Activated CD4-positive, alpha-beta T cell treated with anti-CD3 and anti-CD28 coated beads for 36 hours (primary cell): ENCODE measurements at regions of chr1 and their contacts with region 1.

Region 1: DNA sequence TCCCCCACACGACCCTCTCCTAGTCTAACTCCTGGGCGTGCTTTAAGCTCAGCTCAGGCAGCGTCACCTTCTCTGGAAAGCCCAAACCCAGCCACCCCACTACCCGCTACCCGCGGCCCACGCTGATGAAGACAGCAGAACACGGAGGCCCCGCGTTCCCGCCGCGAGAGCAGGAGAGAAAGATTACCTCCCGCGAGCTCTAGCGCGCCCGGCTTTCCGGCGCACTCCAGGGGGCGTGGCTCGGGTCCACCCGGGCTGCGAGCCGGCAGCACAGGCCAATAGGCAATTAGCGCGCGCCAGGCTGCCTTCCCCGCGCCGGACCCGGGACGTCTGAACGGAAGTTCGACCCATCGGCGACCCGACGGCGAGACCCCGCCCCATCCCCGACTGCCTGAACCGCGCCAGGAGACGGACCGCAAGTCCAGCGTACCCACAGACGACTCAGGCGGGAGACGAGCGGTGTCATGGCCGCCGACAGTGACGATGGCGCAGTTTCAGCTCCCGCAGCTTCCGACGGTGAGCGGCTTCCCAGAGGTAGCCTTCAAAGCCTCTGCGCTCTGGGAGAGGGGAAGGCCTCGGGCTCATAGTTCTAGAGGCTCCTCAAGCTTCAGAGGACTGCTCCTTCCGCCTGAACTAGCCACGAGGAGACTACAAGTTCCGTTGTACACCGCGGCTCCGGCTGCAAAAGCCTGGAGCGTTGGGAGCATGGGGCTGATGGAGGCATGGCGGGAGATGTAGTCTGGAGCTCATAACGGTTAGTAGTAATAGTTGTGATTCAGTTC is at the starts of genes MUTYH and TOE1:
- DNase-seq: peak; percentile 98
- ATAC-seq: peak; percentile 86
- H3K4me3 Mint-ChIP-seq: peak within 1 kb of the TSS; percentile 100
- H3K27ac Mint-ChIP-seq: peak within 1 kb of the TSS; percentile 100
- H3K4me1 Mint-ChIP-seq: peaks cover 27% of the 10 kb centered on the region
- H3K27me3 Mint-ChIP-seq: no peaks in the 10 kb centered on the region
- total RNA-seq, gene MUTYH: 48.6 to 53.7 TPM
- total RNA-seq, gene TOE1: 29.8 to 42.3 TPM

Region 2: GRCh38 chr1:44674113-44675000 is 665.6 kb before region 1 on chr1 and contains the starts of genes ARMH1 and TMEM53:
- CTCF ChIA-PET with region 1: no interaction called
- POLR2A ChIA-PET with region 1: interaction called, 3 read pairs
- intact Hi-C with region 1: loop called in 1 of 2 experiments (anchors 1 kb)
- DNase-seq: peak; percentile 99
- ATAC-seq: peak; percentile 97
- H3K4me3 Mint-ChIP-seq: peak within 1 kb of the TSS; percentile 78
- H3K27ac Mint-ChIP-seq: peak within 1 kb of the TSS; percentile 84
- H3K4me1 Mint-ChIP-seq: peaks cover 24% of the 10 kb centered on the region
- H3K27me3 Mint-ChIP-seq: no peaks in the 10 kb centered on the region
- total RNA-seq, gene ARMH1: 67.3 to 75.1 TPM
- total RNA-seq, gene TMEM53: 4.3 to 5.5 TPM

Region 3: DNA sequence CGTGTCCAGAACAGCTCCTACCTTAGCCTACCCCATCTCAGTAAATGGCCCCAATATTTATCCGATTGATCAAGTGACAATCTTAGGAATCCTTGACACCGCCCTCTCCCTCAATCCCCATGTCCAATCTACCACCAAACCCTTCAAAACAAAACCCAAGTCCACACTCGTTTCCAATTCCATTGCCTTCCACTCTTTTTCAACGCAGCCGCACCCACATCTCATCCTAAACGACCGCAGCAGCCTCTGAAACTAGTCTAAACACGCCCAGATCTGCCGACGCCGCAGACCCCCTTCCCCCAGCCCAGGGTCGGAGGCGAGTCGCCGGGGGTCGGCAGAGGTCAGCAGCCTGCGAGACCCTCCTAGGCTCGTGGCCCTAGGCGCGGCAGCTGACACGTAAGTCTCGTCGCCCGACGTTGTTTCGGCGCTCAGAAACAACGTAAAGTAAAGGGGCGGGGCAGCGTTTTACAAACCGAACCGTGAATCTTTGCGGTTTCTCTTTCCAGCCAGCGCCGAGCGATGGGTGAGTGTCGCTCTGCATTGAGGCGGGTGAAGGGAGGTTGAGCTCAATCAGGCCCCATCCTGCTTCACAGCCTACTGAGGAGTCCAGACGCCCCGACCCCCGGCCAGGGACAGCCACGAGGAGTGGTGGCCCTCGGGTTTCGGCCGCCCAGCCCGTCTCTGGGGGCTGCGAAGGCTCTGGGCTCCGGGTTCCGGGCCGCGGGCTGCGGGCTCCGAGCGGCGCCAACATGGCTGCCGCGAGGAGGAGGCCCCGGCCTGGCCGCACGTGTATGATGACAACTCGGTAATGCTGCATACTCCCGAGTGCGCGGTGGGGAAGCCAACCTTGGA is 564.7 kb before region 1 on chr1 and contains the start of gene RPS8:
- CTCF ChIA-PET with region 1: no interaction called
- POLR2A ChIA-PET with region 1: interaction called, 5 read pairs
- intact Hi-C with region 1: loop called in 1 of 2 experiments (anchors 1 kb)
- DNase-seq: peak; percentile 94
- ATAC-seq: peak; percentile 84
- H3K4me3 Mint-ChIP-seq: peak within 1 kb of the TSS; percentile 96
- H3K27ac Mint-ChIP-seq: peak within 1 kb of the TSS; percentile 100
- H3K4me1 Mint-ChIP-seq: peaks cover 33% of the 10 kb centered on the region
- H3K27me3 Mint-ChIP-seq: no peaks in the 10 kb centered on the region
- total RNA-seq, gene RPS8: 3,005 to 3,275 TPM

Region 4: DNA sequence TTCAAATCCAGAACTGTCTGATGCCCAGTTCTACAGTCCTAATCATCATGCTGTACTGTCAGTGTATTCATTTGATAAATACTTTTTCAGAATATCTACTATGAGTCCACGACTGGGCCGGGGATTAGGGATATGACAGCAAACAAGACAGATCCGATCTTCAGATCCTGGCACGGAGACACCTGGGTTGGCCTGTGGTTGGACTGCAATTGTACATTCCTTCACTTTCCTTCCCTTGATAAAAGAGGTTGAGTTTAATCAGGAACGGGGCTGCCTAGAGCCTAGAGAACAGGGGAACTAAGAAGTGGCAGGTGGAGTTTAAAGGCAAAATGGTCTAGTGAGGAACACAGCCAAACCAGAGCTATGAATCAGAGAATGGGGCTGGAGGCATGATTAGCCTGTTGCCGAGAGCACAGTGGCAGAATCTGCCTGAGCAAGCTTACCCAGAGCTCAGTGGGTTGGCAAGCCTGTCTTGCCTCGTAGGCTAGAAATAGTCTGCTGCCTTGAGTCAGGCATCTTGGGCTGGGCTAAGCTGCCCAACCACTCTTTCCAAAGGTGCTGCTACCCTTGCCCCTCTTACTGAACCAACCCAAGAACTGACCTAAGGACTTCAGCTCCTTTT is 458.9 kb before region 1 on chr1:
- CTCF ChIA-PET with region 1: no interaction called
- POLR2A ChIA-PET with region 1: no interaction called
- intact Hi-C with region 1: no loop called
- DNase-seq: no peak
- ATAC-seq: no peak
- H3K4me3 Mint-ChIP-seq: no peak overlapping the region
- H3K27ac Mint-ChIP-seq: no peak overlapping the region
- H3K4me1 Mint-ChIP-seq: no peaks in the 10 kb centered on the region
- H3K27me3 Mint-ChIP-seq: no peaks in the 10 kb centered on the region

Region 5: GRCh38 chr1:44985747-44986359 is 354.1 kb before region 1 on chr1:
- CTCF ChIA-PET with region 1: no interaction called
- POLR2A ChIA-PET with region 1: interaction called, 8 read pairs
- intact Hi-C with region 1: loop called in 1 of 2 experiments (anchors 1 kb)
- DNase-seq: no peak
- ATAC-seq: no peak
- H3K4me3 Mint-ChIP-seq: peak overlapping the region; percentile 96
- H3K27ac Mint-ChIP-seq: peak overlapping the region; percentile 87
- H3K4me1 Mint-ChIP-seq: peaks cover 22% of the 10 kb centered on the region
- H3K27me3 Mint-ChIP-seq: no peaks in the 10 kb centered on the region

Region 6: GRCh38 chr1:45122724-45123123 is 217.3 kb before region 1 on chr1:
- CTCF ChIA-PET with region 1: no interaction called
- POLR2A ChIA-PET with region 1: no interaction called
- intact Hi-C with region 1: no loop called
- DNase-seq: no peak
- ATAC-seq: no peak
- H3K4me3 Mint-ChIP-seq: no peak overlapping the region
- H3K27ac Mint-ChIP-seq: no peak overlapping the region
- H3K4me1 Mint-ChIP-seq: peaks cover 6% of the 10 kb centered on the region
- H3K27me3 Mint-ChIP-seq: no peaks in the 10 kb centered on the region

Region 7: DNA sequence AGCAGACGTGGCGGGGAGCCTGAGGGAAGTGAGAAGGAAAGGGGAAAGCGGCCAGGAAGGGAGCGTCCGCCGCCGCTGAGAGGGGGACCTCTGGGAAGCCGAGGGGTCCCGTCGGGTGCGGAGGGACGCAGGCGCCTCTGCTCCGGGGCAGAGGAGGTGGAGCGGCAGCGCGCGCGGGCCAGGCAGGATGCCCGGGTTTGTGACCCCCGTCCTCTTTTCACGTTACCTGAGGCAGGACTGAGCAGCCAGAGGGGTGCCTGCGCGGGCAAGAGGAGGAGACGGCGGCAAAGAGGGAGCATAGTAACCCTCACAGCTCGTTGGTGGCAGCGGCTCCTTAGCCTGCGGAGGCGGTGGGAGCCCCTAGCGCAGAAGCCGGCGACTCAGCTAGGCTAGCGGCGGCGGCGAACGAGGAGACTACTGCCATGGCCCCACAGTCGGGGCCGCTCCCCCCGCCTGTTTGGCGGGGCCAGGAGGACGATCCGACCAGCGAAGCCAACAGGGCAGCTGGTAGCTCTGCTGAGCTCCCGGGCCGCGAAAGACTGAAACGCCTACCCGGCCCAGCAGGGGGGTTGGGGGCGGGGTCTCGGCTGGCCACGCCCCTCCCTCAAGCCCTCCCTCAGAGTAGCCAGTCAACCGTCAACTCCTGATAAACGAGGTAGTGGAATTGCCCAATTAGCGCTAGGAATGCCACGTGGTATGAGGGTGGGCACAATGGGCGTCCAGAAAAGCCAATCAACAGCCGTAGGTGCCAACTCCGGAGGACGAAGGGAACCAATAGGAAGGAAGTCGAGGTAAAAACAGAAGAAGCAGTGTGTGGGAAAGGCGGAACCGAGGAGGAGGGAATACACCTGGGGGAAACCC is 150.9 kb after region 1 on chr1 and contains the start of gene TESK2:
- CTCF ChIA-PET with region 1: interaction called, 40 read pairs
- POLR2A ChIA-PET with region 1: interaction called, 36 read pairs
- intact Hi-C with region 1: loop called (anchors 1 kb)
- DNase-seq: peak; percentile 97
- ATAC-seq: peak; percentile 94
- H3K4me3 Mint-ChIP-seq: no peak within 1 kb of the TSS
- H3K27ac Mint-ChIP-seq: no peak within 1 kb of the TSS
- H3K4me1 Mint-ChIP-seq: peaks cover 4% of the 10 kb centered on the region
- H3K27me3 Mint-ChIP-seq: no peaks in the 10 kb centered on the region
- total RNA-seq, gene TESK2: 3.1 to 3.3 TPM

Region 8: GRCh38 chr1:45750298-45751038 is 410.5 kb after region 1 on chr1 and contains the start of gene IPP:
- CTCF ChIA-PET with region 1: no interaction called
- POLR2A ChIA-PET with region 1: interaction called, 4 read pairs
- intact Hi-C with region 1: loop called in 1 of 2 experiments (anchors 1 kb)
- DNase-seq: peak; percentile 97
- ATAC-seq: peak; percentile 99
- H3K4me3 Mint-ChIP-seq: peak within 1 kb of the TSS; percentile 93
- H3K27ac Mint-ChIP-seq: peak within 1 kb of the TSS; percentile 95
- H3K4me1 Mint-ChIP-seq: peaks cover 27% of the 10 kb centered on the region
- H3K27me3 Mint-ChIP-seq: no peaks in the 10 kb centered on the region
- total RNA-seq, gene IPP: 11.6 to 21.8 TPM